Posterior vena cava (tissue), 2 donors: ENCODE measurements at regions of chr21 and their contacts with region 1.

Region 1: DNA sequence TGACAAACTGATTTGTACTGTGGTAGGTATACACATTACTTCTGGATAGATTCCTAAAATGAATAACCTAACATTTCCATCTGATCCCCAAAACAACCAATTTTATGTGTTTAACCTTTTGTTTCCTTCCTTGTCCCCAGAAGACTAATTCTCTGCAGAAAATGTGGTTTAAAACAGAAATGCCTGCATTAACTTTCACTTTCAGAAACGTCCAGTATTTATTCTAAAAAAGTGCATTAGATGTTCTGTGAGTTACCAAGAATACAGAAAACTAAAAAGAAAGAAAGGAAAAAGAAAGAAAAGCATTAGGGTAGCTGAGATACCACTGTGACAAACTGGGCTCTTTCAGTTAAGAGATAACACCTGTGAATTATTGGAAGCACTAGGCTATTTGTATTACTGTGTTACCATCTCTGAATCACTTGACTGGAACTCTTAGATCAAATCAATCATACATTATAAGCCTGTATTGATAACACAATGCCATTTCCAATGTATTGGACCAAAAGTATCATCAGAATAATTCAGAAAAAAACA is 177.7 kb downstream of the NCAM2 start:
- DNase-seq: no peak

Region 2: DNA sequence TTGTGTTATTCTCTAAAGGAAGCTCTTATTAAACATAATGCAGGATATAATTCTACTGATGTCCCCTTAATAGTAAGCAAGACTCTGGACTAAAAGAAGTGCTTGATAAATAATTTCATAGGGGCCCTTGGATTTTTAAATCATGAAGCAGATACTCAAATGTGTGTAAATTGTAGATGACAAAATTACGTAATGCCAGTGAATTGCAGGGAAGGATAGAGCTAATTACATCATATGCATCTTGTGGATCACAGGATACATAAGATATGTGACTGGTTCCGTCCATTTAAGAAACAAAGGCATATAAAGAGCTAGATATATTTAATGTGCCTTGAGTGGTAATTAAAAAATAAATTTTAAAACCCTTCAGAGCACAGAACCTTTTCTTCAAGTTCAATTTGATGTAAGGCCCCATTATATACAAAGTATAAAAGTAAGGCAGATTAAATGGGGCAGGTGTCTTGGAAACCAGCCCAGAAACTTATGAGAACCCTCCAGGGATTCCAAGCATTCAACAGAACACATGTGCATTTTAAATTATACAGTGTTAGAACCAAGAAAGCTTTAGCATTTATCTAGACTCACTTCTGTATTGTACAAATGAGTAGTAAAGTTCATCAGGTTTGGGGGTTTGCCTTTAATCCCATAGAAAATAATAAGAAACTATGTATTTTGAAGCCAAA is 12.8 kb after region 1 on chr21:
- intact Hi-C with region 1: loop called in 1 of 2 experiments (anchors 1 kb)
- DNase-seq: no peak